ENCODE measurements at regions of chr2 and their contacts with region 1.

Region 1: DNA sequence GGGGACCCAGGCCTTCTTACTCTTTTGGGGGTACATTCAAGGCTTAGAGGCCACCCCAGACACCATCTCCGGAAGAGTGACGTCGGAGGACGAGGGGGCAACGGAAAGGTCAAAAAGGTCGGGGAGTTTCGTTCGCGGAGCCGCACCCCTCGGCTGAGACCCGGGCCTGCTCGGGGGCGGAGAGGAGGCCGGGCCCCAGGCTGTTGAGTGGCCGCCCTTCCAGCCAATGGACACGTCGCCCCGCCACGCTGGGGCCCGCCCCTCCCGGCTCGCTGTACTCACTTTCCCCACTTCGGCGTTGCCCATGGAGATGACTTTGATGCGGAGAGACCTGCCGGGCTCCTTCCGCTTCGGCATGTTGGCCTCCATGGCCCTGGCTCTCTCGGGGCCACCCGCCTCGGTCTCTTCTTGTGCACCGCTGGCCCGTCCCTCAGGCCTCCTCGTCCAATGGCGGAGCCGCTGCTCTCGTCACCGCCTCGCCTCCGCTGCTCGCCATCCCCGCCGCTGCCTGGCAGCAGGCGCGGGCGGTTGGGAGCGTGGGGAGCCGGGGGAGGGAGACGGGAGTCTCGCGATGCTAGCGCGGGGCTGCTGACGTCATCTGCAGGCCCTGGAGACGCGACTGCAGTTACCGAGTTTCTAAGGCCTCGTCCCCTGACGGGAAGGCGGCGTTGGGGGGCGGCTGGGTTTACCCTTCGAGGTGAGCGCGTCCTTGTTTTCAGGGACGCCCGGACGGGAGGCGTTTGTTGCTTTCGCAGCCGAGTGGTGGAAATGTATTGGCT is at the start of gene DNAJC27:
- DNase-seq: peak; percentile 89 to 96
- H3K4me3 ChIP-seq: peak within 1 kb of the TSS; percentile 95
- H3K27ac ChIP-seq: peak within 1 kb of the TSS; percentile 86
- H3K4me1 ChIP-seq: peaks cover 18% of the 10 kb centered on the region
- H3K27me3 ChIP-seq: no peaks in the 10 kb centered on the region
- CTCF ChIP-seq: no peak
- total RNA-seq, gene DNAJC27: 5.1 and 6.3 TPM in 2 replicates

Region 2: DNA sequence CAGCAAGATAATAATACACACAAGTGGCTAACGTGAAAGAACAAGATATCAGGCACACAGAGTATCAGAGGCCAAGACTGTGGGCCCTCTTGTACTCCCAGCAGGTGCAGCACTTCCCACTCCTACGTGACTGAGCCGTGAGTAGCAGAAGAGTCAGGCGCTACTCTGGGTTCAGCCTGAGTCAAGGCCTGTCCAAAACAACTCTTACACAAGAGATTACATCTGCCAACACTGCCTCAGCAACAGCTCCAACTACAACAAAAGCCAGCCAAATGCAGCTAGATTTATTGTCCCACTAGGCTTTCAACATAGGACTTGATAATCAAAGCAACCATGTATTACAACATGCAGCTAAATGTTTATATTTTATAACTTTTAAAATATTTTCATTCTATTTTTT is 667.6 kb before region 1 on chr2:
- CTCF ChIA-PET with region 1: no interaction called
- POLR2A ChIA-PET with region 1: no interaction called
- intact Hi-C with region 1: no loop called
- DNase-seq: no peak
- H3K4me3 ChIP-seq: no peak overlapping the region
- H3K27ac ChIP-seq: no peak overlapping the region
- H3K4me1 ChIP-seq: no peaks in the 10 kb centered on the region
- H3K27me3 ChIP-seq: no peaks in the 10 kb centered on the region
- CTCF ChIP-seq: no peak

Region 3: DNA sequence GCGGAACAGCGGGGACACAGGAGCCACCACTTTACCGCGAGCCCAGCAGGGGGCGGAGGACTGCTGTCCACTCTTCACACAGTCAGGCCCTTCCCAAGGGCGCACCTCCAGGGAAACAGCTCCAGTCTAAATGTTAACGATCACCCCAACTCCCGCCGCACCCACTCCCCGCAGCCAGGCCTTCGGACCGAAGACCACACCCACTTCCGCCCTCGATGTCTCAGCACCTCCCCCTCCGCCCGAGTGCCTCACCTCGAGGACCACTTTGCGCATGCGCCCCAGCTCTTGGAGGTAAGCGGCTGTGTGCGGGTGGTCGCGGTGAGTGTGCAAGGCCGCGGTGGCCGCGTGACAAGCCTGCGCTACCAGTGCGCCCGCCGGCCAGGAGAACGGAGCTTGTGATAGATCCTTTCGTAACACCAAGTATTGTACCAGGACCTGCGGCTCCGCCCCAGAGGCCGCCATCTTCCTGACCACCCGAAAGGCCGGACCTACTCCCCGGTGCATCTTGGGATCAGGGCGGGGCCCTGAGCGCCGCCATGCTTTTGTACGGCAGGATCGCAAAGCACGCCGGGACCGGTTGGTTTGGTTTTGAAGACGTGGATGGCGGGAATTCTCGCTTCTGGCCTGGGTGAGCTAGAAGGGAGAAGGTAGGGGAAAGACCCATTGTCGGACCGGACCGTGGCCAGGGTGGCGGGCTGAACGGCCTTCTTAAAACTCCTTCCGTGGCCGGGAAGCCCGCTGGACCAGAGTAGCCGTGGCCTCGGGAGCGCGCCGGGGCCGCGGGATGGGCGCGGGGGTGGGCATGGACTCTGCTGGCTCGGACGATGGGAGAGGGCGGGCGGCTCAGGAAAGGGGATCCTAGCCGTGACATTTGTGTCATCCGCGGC is 178.6 kb before region 1 on chr2 and contains the starts of genes CENPO and PTRHD1:
- CTCF ChIA-PET with region 1: no interaction called
- POLR2A ChIA-PET with region 1: no interaction called
- intact Hi-C with region 1: loop called (anchors 5 kb)
- DNase-seq: peak; percentile 93 to 96
- H3K4me3 ChIP-seq: peak within 1 kb of the TSS; percentile 71
- H3K27ac ChIP-seq: peak within 1 kb of the TSS; percentile 89
- H3K4me1 ChIP-seq: peaks cover 31% of the 10 kb centered on the region
- H3K27me3 ChIP-seq: no peaks in the 10 kb centered on the region
- CTCF ChIP-seq: peak; percentile 82
- total RNA-seq, gene CENPO: 21.3 and 33.0 TPM in 2 replicates
- total RNA-seq, gene PTRHD1: 23.6 and 28.7 TPM in 2 replicates

Region 4: DNA sequence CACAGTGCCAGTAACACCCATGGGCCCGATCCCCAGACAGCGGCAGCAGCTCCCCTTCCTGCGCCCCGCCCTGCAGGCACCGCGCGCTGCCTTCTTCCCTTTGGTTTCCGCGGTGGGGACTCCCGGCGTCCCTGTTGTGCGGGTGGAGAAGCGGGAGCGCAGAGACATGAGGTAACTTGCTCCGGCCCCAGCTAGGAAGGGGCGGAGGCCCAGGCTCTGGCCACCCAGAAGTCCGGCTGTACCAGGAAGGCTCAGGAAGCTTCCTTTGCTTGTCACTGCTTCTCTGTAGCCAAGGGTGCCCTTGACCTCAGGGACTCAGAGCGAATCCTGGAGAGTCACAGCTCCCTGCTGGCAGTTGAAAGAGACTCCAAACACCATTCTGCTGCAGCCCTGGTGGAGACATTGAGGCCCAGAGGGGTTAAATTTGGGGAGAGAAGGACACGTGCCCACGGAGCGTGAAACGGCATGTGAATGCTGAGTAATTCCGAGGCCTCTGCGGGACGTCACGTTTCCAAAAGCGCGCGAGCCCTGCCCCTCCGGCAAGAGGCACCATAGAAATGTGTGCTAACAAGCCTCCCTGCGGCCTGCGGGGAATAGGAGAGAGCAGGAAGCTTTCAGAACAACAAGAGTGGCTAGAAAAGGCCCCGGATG is 45.0 kb before region 1 on chr2:
- CTCF ChIA-PET with region 1: no interaction called
- POLR2A ChIA-PET with region 1: no interaction called
- intact Hi-C with region 1: no loop called
- DNase-seq: no peak
- H3K4me3 ChIP-seq: no peak overlapping the region
- H3K27ac ChIP-seq: no peak overlapping the region
- H3K4me1 ChIP-seq: no peaks in the 10 kb centered on the region
- H3K27me3 ChIP-seq: no peaks in the 10 kb centered on the region
- CTCF ChIP-seq: no peak

Region 5: DNA sequence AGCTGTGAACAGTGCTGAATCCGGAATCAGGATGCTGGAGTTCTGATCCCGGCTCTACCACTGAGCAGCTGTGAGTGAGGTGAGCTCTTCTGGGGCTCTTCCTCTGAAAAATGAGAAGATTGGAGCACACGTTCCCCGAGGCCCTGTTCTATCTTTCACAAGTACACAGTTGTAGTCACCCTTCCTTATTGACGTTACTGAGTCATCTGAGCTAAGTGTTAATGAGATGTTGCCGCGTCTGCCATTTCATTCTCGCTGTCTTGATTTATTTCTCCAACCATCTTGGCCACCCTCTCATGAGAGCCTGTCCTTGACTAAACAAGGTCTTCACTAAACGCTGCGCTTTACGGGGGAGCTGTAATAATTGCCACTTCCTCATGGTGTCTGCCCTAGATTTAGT is 38.2 kb after region 1 on chr2:
- CTCF ChIA-PET with region 1: no interaction called
- POLR2A ChIA-PET with region 1: no interaction called
- intact Hi-C with region 1: no loop called
- DNase-seq: peak in 1 of 2 experiments; percentile 81
- H3K4me3 ChIP-seq: no peak overlapping the region
- H3K27ac ChIP-seq: no peak overlapping the region
- H3K4me1 ChIP-seq: 0 out of 2 replicates have a peak, but pooled peaks cover 3% of the 10 kb centered on the region
- H3K27me3 ChIP-seq: no peaks in the 10 kb centered on the region
- CTCF ChIP-seq: no peak

Region 6: GRCh38 chr2:25078171-25079049 is 106.7 kb after region 1 on chr2:
- CTCF ChIA-PET with region 1: no interaction called
- POLR2A ChIA-PET with region 1: interaction called, 8 read pairs
- intact Hi-C with region 1: loop called (anchors 1 kb)
- DNase-seq: peak; percentile 64 to 98
- H3K4me3 ChIP-seq: peak overlapping the region; percentile 23; the same call in 1 of the 2 replicates
- H3K27ac ChIP-seq: peak overlapping the region; percentile 33
- H3K4me1 ChIP-seq: peaks cover 19% of the 10 kb centered on the region
- H3K27me3 ChIP-seq: peaks cover 53% of the 10 kb centered on the region
- CTCF ChIP-seq: no peak

Region 7: GRCh38 chr2:25201265-25201664 is 229.5 kb after region 1 on chr2:
- CTCF ChIA-PET with region 1: no interaction called
- POLR2A ChIA-PET with region 1: no interaction called
- intact Hi-C with region 1: loop called (anchors 1 kb)
- DNase-seq: no peak
- H3K4me3 ChIP-seq: no peak overlapping the region
- H3K27ac ChIP-seq: no peak overlapping the region
- H3K4me1 ChIP-seq: no peaks in the 10 kb centered on the region
- H3K27me3 ChIP-seq: no peaks in the 10 kb centered on the region
- CTCF ChIP-seq: peak; percentile 46